ENCODE measurements at regions of chr11 and their contacts with region 1.

Region 1: GRCh38 chr11:120172054-120172911 is 34.4 kb upstream of the TRIM29 start:
- ATAC-seq: peak; percentile 10 to 82 (median 74)
- H3K4me3 ChIP-seq: no peak overlapping the region
- H3K27ac ChIP-seq: no peak overlapping the region
- H3K4me1 ChIP-seq: peaks cover 0 to 4% of the 10 kb centered on the region in 2 donors

Region 2: GRCh38 chr11:120229451-120230424 is 57.5 kb after region 1 on chr11:
- in situ Hi-C with region 1: loop called in 6 of 9 experiments (anchors 10 kb)
- ATAC-seq: peak in 3 of 8 experiments; percentile 26 to 36 (median 33)
- H3K4me3 ChIP-seq: no peak overlapping the region
- H3K27ac ChIP-seq: no peak overlapping the region
- H3K4me1 ChIP-seq: peaks cover 9 to 10% of the 10 kb centered on the region in 2 donors

Region 3: DNA sequence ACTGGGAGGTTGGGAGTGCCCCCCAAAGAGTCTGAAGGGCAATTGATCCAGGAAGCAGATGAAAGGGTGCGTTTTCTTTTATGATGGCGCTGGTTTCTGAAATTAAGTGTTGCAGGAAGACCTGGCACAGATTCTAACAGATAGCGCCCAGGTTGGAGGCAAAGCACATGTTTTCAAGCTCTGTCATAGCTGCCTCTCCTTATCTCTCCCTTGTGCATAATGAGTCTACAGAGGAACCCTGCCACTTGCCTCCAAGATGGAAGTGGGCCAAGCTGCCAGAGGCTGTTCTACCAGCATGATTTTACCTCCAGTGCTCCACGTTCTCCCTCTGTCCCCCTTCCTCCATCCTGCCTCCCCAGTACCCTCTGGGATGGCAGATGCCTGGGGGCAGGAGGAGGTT is 122.8 kb after region 1 on chr11:
- in situ Hi-C with region 1: loop called in 5 of 9 experiments (anchors 10 to 25 kb)
- ATAC-seq: no peak
- H3K4me3 ChIP-seq: no peak overlapping the region
- H3K27ac ChIP-seq: no peak overlapping the region
- H3K4me1 ChIP-seq: no peaks in the 10 kb centered on the region

Region 4: GRCh38 chr11:120303004-120303637 is 130.8 kb after region 1 on chr11:
- in situ Hi-C with region 1: loop called in 5 of 9 experiments (anchors 10 to 25 kb)
- ATAC-seq: peak; percentile 8 to 72 (median 42)
- H3K4me3 ChIP-seq: no peak overlapping the region
- H3K27ac ChIP-seq: no peak overlapping the region
- H3K4me1 ChIP-seq: no peaks in the 10 kb centered on the region

Region 5: GRCh38 chr11:120652705-120653335 is 480.5 kb after region 1 on chr11:
- in situ Hi-C with region 1: no loop called
- ATAC-seq: peak in 1 of 8 experiments; percentile 47
- H3K4me3 ChIP-seq: no peak overlapping the region
- H3K27ac ChIP-seq: no peak overlapping the region
- H3K4me1 ChIP-seq: no peaks in the 10 kb centered on the region

Measured in motor neuron (in vitro differentiated cells).